ENCODE measurements at regions of chr3 and their contacts with region 1.

Region 1: GRCh38 chr3:187164885-187165543 is 25.7 kb upstream of the RPL39L start:
- DNase-seq: peak in 3 of 7 donors; percentile 23 to 44 (median 40)
- H3K4me3 ChIP-seq: no peak overlapping the region
- H3K27ac ChIP-seq: no peak overlapping the region
- H3K4me1 ChIP-seq: no peaks in the 10 kb centered on the region
- H3K27me3 ChIP-seq: no peaks in the 10 kb centered on the region
- CTCF ChIP-seq: peak; percentile 57 to 88 (median 70)
- POLR2A ChIP-seq: no peak

Region 2: DNA sequence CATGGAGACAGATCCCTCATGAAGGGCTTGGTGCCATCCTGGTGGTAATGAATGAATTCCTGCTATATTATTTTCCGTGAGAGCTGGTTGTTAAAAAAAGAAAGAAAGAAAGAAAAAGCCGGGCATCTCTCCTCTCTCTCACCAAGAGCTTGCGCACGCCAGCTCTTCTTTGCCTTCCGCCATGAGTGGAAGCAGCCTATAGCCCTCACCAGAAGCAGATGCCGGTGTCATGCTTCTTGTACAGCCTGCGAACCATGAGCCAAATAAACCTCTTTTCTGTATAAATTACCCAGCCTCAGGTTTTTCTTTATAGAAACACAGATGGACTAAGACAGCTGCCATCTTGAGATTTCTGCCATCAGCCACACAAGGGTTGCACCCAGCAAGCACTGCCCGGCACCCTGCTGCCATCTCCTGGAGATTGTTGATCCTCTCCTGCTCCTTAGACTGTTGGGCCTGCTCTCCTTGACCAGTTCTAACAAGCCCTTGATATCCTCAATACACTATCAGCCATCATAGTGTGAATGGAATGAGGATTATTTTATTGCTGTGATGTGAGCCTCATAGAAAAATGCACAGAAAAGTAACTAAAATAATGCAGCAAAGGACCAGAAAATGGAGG is 555.7 kb before region 1 on chr3:
- intact Hi-C with region 1: loop called in 1 of 2 experiments (anchors 10 kb)
- DNase-seq: peak in 1 of 7 donors; percentile 3
- H3K4me3 ChIP-seq: no peak overlapping the region
- H3K27ac ChIP-seq: no peak overlapping the region
- H3K4me1 ChIP-seq: no peaks in the 10 kb centered on the region
- H3K27me3 ChIP-seq: no peaks in the 10 kb centered on the region
- CTCF ChIP-seq: no peak
- POLR2A ChIP-seq: no peak

Region 3: GRCh38 chr3:186849374-186849975 is 315.5 kb before region 1 on chr3:
- intact Hi-C with region 1: loop called (anchors 10 kb)
- DNase-seq: no peak
- H3K4me3 ChIP-seq: no peak overlapping the region
- H3K27ac ChIP-seq: no peak overlapping the region
- H3K4me1 ChIP-seq: no peaks in the 10 kb centered on the region
- H3K27me3 ChIP-seq: peaks cover 12% of the 10 kb centered on the region
- CTCF ChIP-seq: peak in 5 of 6 experiments; percentile 6 to 45 (median 28)
- POLR2A ChIP-seq: no peak

Region 4: DNA sequence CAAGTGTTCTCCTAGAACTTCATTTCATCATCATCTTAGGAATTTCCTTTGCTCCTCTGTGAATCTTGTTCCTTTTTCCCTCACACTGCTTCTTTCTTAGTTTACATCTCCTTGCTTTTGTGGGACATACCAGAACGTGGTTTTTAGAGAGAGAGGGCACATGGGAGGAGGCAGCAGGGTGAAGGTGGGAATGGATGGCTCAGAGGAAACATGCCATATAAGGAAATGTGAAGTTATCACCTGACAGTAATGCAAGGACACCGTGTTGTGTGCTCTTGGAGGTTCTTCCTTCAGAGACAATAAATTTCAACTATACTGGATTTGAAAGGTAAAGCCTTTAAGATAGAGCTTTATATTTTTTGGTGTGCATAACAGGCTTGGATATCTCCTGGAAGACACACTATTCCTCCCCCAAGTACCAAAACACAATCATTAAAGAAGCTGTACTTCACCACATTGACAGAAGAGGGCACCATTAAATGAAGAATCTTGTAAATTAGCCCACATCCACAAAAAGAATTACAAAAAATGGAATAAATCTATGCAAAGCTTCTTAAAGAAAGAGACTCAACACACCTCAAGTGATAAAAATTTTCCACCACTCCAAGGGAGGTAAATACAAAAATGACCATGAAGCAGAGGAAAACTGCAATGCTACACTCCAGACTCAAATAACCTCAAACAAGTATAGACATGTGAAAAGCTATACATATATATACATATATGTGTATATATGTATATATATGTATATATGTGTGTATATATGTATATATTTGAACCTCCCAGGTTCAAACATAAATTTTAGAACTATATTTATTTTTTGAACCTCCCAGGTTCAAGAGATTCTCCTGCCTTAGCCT is 51.9 kb before region 1 on chr3:
- intact Hi-C with region 1: loop called in 1 of 2 experiments (anchors 5 kb)
- DNase-seq: no peak
- H3K4me3 ChIP-seq: no peak overlapping the region
- H3K27ac ChIP-seq: no peak overlapping the region
- H3K4me1 ChIP-seq: no peaks in the 10 kb centered on the region
- H3K27me3 ChIP-seq: no peaks in the 10 kb centered on the region
- CTCF ChIP-seq: peak; percentile 32 to 62 (median 51)
- POLR2A ChIP-seq: no peak

Region 5: DNA sequence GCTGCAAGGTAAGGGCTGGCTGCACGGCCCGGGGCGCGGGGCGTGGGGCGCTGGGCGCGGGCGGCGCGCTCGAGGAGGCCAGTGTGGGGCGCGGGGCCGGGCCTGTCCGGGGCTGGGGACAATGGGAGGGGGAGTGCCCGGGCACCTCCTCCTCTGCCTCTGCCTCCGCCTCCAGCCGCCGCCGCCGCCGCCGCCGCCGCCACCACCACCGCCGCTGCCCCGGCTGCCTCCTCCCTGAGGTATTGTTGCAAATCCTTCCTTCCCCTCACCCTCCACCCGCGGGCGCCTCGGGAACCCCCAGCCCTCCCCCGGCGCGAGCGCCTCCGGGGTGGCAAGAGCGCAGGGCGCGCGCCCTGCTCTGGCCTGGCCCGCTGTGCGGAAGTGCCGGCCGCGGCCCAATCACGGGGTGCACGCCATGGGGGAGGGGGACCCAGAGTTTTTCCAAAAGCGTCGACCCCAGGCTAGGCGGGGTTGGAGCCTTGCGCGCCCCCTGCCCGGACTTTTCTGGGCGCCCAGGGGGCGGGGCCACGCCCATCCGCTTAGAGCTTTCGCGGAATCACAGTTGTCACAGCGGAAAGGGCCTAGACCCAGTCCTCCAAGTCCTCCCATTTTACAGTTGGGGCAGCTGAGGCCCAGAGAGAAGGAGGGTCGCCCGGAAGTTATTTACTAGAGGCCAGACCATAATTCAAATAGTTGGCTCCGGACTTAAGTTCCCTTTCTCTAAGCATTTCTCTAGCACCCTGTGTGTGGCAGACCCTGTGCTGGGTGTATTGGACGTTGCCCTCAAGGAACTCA is 989.2 kb after region 1 on chr3 and contains the start of gene LPP:
- intact Hi-C with region 1: no loop called
- DNase-seq: peak; percentile 76 to 86 (median 81)
- H3K4me3 ChIP-seq: peak within 1 kb of the TSS; percentile 54 to 94 (median 73)
- H3K27ac ChIP-seq: peak within 1 kb of the TSS; percentile 84 to 99 (median 93)
- H3K4me1 ChIP-seq: peaks cover 21 to 57% of the 10 kb centered on the region in 2 donors
- H3K27me3 ChIP-seq: no peaks in the 10 kb centered on the region
- CTCF ChIP-seq: peak in 1 of 6 experiments; percentile 1
- POLR2A ChIP-seq: peak in 1 of 2 donors; percentile 71
- total RNA-seq, gene LPP: 33.4 to 170 (median 131) TPM

Measured in adrenal gland (tissue), 19 donors.